ENCODE measurements at regions of chr1 and their contacts with region 1.

Region 1: GRCh38 chr1:53860967-53861411 is 22.9 kb upstream of the NDC1 start:
- DNase-seq: peak in 7 of 9 donors; percentile 43 to 63 (median 53)
- ATAC-seq: peak; percentile 86
- H3K4me3 ChIP-seq: no peak overlapping the region
- H3K4me3 Mint-ChIP-seq: no peak overlapping the region
- H3K27ac ChIP-seq: no peak overlapping the region
- H3K27ac Mint-ChIP-seq: peak overlapping the region in 3 of 9 donors; percentile 29 to 68 (median 34)
- H3K4me1 ChIP-seq: no peaks in the 10 kb centered on the region
- H3K4me1 Mint-ChIP-seq: peaks cover 0 to 9% (median 8%) of the 10 kb centered on the region in 7 donors
- H3K27me3 ChIP-seq: no peaks in the 10 kb centered on the region
- H3K27me3 Mint-ChIP-seq: no peaks in the 10 kb centered on the region

Region 2: GRCh38 chr1:53959664-53960250 is 98.8 kb after region 1 on chr1:
- CTCF ChIA-PET with region 1: interaction called, 110 read pairs
- POLR2A ChIA-PET with region 1: interaction called, 10 read pairs
- intact Hi-C with region 1: loop called (anchors 1 kb)
- DNase-seq: peak in 7 of 9 donors; percentile 33 to 62 (median 46)
- ATAC-seq: peak; percentile 86
- H3K4me3 ChIP-seq: no peak overlapping the region
- H3K4me3 Mint-ChIP-seq: no peak overlapping the region
- H3K27ac ChIP-seq: no peak overlapping the region
- H3K27ac Mint-ChIP-seq: no peak overlapping the region
- H3K4me1 ChIP-seq: no peaks in the 10 kb centered on the region
- H3K4me1 Mint-ChIP-seq: peaks cover 4 to 14% (median 5%) of the 10 kb centered on the region in 7 donors
- H3K27me3 ChIP-seq: no peaks in the 10 kb centered on the region
- H3K27me3 Mint-ChIP-seq: no peaks in the 10 kb centered on the region

Region 3: DNA sequence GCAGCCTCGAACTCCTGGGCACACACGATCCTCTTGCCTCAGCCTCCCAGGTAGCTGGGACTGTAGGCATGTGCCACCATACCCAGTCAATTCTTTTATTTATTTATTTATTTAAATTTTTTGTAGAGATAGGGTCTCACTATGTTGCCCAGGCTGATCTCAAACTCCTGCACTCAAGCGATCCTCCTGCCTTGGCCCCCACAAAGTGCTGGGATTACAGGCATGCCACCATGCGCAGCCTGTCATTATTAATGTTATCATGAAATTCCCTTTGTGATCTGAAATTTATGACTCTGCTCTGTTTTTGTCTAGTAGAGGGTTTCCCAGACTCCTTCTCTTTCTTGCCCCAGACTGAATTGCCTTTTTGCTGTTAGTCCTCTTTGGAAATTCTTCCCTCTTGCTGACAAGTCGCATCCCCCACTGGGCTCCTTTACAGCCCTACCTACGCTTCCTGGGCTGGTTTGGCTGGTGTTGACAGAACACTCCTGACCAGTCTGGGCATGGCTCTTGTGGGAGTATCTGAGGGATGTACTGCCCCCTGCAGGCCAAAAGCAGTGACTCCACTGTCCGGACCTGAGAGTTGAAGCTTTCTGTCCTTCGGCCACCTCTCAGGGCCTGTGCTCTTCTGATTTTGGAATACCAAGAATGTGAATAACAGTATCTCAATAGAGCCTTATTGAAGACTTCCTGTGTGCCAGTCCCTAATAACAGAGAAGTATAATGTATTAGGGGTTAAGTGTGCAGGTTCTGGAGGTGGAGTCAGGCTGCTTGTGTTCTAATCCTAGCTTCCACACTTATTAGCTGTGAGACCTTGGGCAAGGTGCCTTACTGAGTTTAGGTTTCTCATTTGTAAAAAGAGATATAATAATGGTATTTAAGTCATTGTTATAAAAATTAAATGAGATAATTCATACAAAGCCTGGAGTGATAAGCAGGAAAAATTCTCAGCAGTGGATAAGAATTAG is 220.6 kb after region 1 on chr1:
- CTCF ChIA-PET with region 1: interaction called, 3 read pairs
- POLR2A ChIA-PET with region 1: no interaction called
- intact Hi-C with region 1: loop called (anchors 1 kb)
- DNase-seq: peak; percentile 20 to 50 (median 40)
- ATAC-seq: peak; percentile 89
- H3K4me3 ChIP-seq: no peak overlapping the region
- H3K4me3 Mint-ChIP-seq: no peak overlapping the region
- H3K27ac ChIP-seq: no peak overlapping the region
- H3K27ac Mint-ChIP-seq: peak overlapping the region in 1 of 9 donors; percentile 53
- H3K4me1 ChIP-seq: no peaks in the 10 kb centered on the region
- H3K4me1 Mint-ChIP-seq: peaks cover 3 to 10% (median 5%) of the 10 kb centered on the region in 7 donors
- H3K27me3 ChIP-seq: no peaks in the 10 kb centered on the region
- H3K27me3 Mint-ChIP-seq: no peaks in the 10 kb centered on the region

Region 4: DNA sequence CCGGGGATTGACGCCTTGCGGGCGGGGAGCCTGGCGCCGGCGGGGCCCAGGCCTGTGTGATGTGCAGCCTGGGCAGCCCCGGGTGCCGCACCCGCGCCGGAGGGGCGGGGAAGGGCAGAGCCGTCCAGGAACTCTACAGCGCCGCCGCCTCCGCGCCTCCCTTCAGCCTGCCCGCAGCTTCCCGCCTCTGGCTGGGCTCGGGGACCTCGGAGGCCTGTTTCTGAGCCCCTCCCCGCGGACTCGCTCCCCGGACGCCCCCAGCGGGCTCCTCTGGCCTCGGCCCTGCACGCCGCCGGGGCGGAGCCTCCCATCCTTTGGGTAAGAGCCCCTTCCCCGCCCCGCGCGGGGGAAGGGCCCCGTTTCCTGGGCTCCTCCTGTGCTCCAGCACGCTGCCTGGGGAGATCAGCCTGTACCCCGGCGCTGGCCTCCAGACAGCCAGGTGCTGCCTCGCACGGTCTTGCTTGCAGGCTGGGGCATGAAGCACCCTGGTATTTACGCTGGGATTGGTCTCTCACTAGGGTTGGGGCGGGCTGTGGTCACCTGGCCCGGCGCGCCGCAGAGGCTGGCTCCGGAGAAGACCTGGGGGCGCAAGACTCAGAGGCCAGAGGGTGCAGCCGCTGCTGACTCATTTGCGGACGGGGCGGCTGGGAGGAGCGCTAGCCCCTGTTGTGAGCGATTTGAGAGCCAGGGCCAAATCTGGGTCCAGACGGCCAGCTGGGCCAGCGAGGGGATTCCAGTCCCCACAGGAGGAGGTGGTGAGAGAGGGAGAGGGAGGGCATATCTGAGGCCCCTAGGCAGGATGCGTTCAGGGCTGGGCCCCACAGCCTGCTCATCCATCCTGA is 681.4 kb after region 1 on chr1:
- CTCF ChIA-PET with region 1: no interaction called
- POLR2A ChIA-PET with region 1: no interaction called
- intact Hi-C with region 1: no loop called
- DNase-seq: peak; percentile 26 to 72 (median 44)
- ATAC-seq: peak; percentile 90
- H3K4me3 ChIP-seq: peak overlapping the region; percentile 54
- H3K4me3 Mint-ChIP-seq: peak overlapping the region; percentile 66 to 87 (median 82)
- H3K27ac ChIP-seq: no peak overlapping the region
- H3K27ac Mint-ChIP-seq: peak overlapping the region in 6 of 9 donors; percentile 15 to 92 (median 58)
- H3K4me1 ChIP-seq: peaks cover 0 to 6% of the 10 kb centered on the region in 2 donors
- H3K4me1 Mint-ChIP-seq: peaks cover 12 to 22% (median 20%) of the 10 kb centered on the region in 7 donors
- H3K27me3 ChIP-seq: no peaks in the 10 kb centered on the region
- H3K27me3 Mint-ChIP-seq: peaks cover 0 to 27% (median 0%) of the 10 kb centered on the region in 5 donors

Region 5: GRCh38 chr1:54671985-54672608 is 811.1 kb after region 1 on chr1:
- CTCF ChIA-PET with region 1: no interaction called
- POLR2A ChIA-PET with region 1: no interaction called
- intact Hi-C with region 1: loop called in 1 of 2 experiments (anchors 1 kb)
- DNase-seq: peak; percentile 18 to 69 (median 53)
- ATAC-seq: peak; percentile 86
- H3K4me3 ChIP-seq: no peak overlapping the region
- H3K4me3 Mint-ChIP-seq: no peak overlapping the region
- H3K27ac ChIP-seq: no peak overlapping the region
- H3K27ac Mint-ChIP-seq: no peak overlapping the region
- H3K4me1 ChIP-seq: no peaks in the 10 kb centered on the region
- H3K4me1 Mint-ChIP-seq: peaks cover 0 to 6% (median 0%) of the 10 kb centered on the region in 7 donors
- H3K27me3 ChIP-seq: no peaks in the 10 kb centered on the region
- H3K27me3 Mint-ChIP-seq: peaks cover 0 to 10% (median 0%) of the 10 kb centered on the region in 5 donors

Measured in naive thymus-derived CD4-positive, alpha-beta T cell (primary cell).